Left ventricle myocardium superior (tissue), 1 donor: ENCODE measurements at regions of chr1 and their contacts with region 1.

Region 1: GRCh38 chr1:201348211-201348566 is 29.3 kb downstream of the TNNT2 start:
- DNase-seq: no peak
- ATAC-seq: peak; percentile 49

Region 2: GRCh38 chr1:201254625-201255506 is 93.3 kb before region 1 on chr1:
- intact Hi-C with region 1: loop called (anchors 10 kb)
- DNase-seq: peak; percentile 78
- ATAC-seq: peak; percentile 85